ENCODE measurements at regions of chr3 and their contacts with region 1.

Region 1: DNA sequence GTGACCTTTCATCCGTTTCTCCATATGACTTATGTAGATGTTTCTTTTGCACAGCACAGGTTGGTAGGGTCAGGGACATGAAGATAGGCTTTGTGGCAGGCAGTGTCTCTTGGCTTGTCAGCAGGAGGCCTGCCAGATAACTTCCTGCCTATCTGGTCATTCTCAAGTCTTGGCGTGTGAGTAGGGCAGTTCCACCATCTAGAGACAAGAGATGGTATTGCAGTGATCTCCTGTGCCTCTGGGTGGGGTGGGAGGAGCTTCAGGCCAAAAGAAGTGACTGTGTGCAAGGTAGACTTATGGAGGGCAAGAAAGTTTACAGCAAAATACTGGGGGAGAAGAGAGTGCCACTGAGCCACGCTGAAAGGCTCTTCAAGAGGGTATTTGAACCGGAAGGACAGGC is 11.0 kb downstream of the TEX264 start:
- DNase-seq: peak; percentile 59 to 93 (median 64)
- ATAC-seq: peak; percentile 80
- H3K4me3 ChIP-seq: peak overlapping the region; percentile 14
- H3K4me3 Mint-ChIP-seq: peak overlapping the region; percentile 47
- H3K27ac ChIP-seq: peak overlapping the region in 1 of 2 donors; percentile 32
- H3K27ac Mint-ChIP-seq: peak overlapping the region; percentile 51
- H3K4me1 ChIP-seq: peaks cover 100% of the 10 kb centered on the region
- H3K4me1 Mint-ChIP-seq: peaks cover 84% of the 10 kb centered on the region
- H3K27me3 ChIP-seq: no peaks in the 10 kb centered on the region
- H3K27me3 Mint-ChIP-seq: no peaks in the 10 kb centered on the region
- CTCF ChIP-seq: peak; percentile 90

Region 2: DNA sequence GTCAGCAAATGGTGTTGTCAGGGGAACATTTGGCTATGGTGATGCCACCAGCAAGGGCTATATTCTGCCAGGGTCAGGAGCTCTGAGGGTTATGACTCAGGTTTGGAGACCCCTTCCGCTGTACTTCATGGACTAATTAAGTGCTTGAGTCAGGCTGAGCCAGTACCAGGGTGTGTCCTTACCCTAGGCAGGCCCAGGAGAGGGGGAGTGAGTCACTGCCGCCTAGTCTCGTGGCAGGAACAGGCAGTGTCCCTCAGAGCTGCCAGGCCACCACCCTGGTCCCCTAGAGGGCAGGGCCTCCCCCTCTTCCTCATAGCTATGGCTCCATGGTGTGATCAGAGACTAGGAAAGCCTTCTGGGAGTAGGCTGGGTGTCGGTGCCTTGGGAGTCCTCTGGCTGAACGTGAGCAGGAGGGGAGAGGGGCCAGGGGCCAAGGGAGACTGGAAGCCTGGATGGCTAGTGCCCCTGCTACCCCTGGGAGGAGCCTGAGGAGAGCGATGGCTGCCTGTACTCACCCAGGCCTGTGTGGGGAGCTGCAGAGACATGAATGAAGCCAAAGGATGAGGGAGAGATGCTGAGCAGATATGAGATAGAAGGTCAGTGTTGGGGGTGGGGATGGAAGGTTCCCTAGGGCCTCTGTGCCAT is 1054.5 kb before region 1 on chr3:
- CTCF ChIA-PET with region 1: no interaction called
- POLR2A ChIA-PET with region 1: no interaction called
- intact Hi-C with region 1: loop called in 1 of 2 experiments (anchors 5 kb)
- DNase-seq: peak in 2 of 14 experiments; percentile 64 to 78
- ATAC-seq: peak; percentile 13
- H3K4me3 ChIP-seq: no peak overlapping the region
- H3K4me3 Mint-ChIP-seq: no peak overlapping the region
- H3K27ac ChIP-seq: no peak overlapping the region
- H3K27ac Mint-ChIP-seq: peak overlapping the region; percentile 70
- H3K4me1 ChIP-seq: peaks cover 99% of the 10 kb centered on the region
- H3K4me1 Mint-ChIP-seq: peaks cover 89% of the 10 kb centered on the region
- H3K27me3 ChIP-seq: no peaks in the 10 kb centered on the region
- H3K27me3 Mint-ChIP-seq: no peaks in the 10 kb centered on the region
- CTCF ChIP-seq: no peak

Region 3: GRCh38 chr3:51384726-51385473 is 297.2 kb before region 1 on chr3 and contains the start of gene MANF:
- CTCF ChIA-PET with region 1: interaction called, 3 read pairs
- POLR2A ChIA-PET with region 1: interaction called, 9 read pairs
- intact Hi-C with region 1: loop called (anchors 1 to 5 kb)
- DNase-seq: peak; percentile 93 to 99 (median 95)
- ATAC-seq: peak; percentile 95
- H3K4me3 ChIP-seq: peak within 1 kb of the TSS; percentile 99
- H3K4me3 Mint-ChIP-seq: peak within 1 kb of the TSS; percentile 99
- H3K27ac ChIP-seq: peak within 1 kb of the TSS; percentile 84 to 96
- H3K27ac Mint-ChIP-seq: peak within 1 kb of the TSS; percentile 99
- H3K4me1 ChIP-seq: peaks cover 47% of the 10 kb centered on the region
- H3K4me1 Mint-ChIP-seq: peaks cover 55% of the 10 kb centered on the region
- H3K27me3 ChIP-seq: no peaks in the 10 kb centered on the region
- H3K27me3 Mint-ChIP-seq: no peaks in the 10 kb centered on the region
- CTCF ChIP-seq: no peak
- total RNA-seq, gene MANF: 26.4 to 30.2 TPM

Region 4: GRCh38 chr3:51642462-51642861 is 39.6 kb before region 1 on chr3:
- CTCF ChIA-PET with region 1: interaction called, 36 read pairs
- POLR2A ChIA-PET with region 1: no interaction called
- intact Hi-C with region 1: loop called (anchors 1 kb)
- DNase-seq: peak in 3 of 14 experiments; percentile 36 to 40 (median 36)
- ATAC-seq: no peak
- H3K4me3 ChIP-seq: no peak overlapping the region
- H3K4me3 Mint-ChIP-seq: no peak overlapping the region
- H3K27ac ChIP-seq: no peak overlapping the region
- H3K27ac Mint-ChIP-seq: no peak overlapping the region
- H3K4me1 ChIP-seq: no peaks in the 10 kb centered on the region
- H3K4me1 Mint-ChIP-seq: no peaks in the 10 kb centered on the region
- H3K27me3 ChIP-seq: no peaks in the 10 kb centered on the region
- H3K27me3 Mint-ChIP-seq: no peaks in the 10 kb centered on the region
- CTCF ChIP-seq: peak; percentile 35

Region 5: GRCh38 chr3:51662456-51662855 is 19.6 kb before region 1 on chr3:
- CTCF ChIA-PET with region 1: interaction called, 113 read pairs
- POLR2A ChIA-PET with region 1: interaction called, 4 read pairs
- intact Hi-C with region 1: no loop called
- DNase-seq: no peak
- ATAC-seq: no peak
- H3K4me3 ChIP-seq: no peak overlapping the region
- H3K4me3 Mint-ChIP-seq: no peak overlapping the region
- H3K27ac ChIP-seq: no peak overlapping the region
- H3K27ac Mint-ChIP-seq: no peak overlapping the region
- H3K4me1 ChIP-seq: no peaks in the 10 kb centered on the region
- H3K4me1 Mint-ChIP-seq: peaks cover 15% of the 10 kb centered on the region
- H3K27me3 ChIP-seq: no peaks in the 10 kb centered on the region
- H3K27me3 Mint-ChIP-seq: no peaks in the 10 kb centered on the region
- CTCF ChIP-seq: no peak

Region 6: GRCh38 chr3:51670823-51671733 is 11.0 kb before region 1 on chr3 and contains the start of gene TEX264:
- CTCF ChIA-PET with region 1: interaction called, 113 read pairs
- POLR2A ChIA-PET with region 1: interaction called, 65 read pairs
- intact Hi-C with region 1: loop called (anchors 1 kb)
- DNase-seq: peak; percentile 88 to 100 (median 95)
- ATAC-seq: peak; percentile 75
- H3K4me3 ChIP-seq: peak within 1 kb of the TSS; percentile 98
- H3K4me3 Mint-ChIP-seq: peak within 1 kb of the TSS; percentile 94
- H3K27ac ChIP-seq: peak within 1 kb of the TSS; percentile 83 to 91
- H3K27ac Mint-ChIP-seq: peak within 1 kb of the TSS; percentile 97
- H3K4me1 ChIP-seq: peaks cover 67% of the 10 kb centered on the region
- H3K4me1 Mint-ChIP-seq: peaks cover 80% of the 10 kb centered on the region
- H3K27me3 ChIP-seq: no peaks in the 10 kb centered on the region
- H3K27me3 Mint-ChIP-seq: no peaks in the 10 kb centered on the region
- CTCF ChIP-seq: no peak
- total RNA-seq, gene TEX264: 24.9 to 25.9 TPM

Region 7: DNA sequence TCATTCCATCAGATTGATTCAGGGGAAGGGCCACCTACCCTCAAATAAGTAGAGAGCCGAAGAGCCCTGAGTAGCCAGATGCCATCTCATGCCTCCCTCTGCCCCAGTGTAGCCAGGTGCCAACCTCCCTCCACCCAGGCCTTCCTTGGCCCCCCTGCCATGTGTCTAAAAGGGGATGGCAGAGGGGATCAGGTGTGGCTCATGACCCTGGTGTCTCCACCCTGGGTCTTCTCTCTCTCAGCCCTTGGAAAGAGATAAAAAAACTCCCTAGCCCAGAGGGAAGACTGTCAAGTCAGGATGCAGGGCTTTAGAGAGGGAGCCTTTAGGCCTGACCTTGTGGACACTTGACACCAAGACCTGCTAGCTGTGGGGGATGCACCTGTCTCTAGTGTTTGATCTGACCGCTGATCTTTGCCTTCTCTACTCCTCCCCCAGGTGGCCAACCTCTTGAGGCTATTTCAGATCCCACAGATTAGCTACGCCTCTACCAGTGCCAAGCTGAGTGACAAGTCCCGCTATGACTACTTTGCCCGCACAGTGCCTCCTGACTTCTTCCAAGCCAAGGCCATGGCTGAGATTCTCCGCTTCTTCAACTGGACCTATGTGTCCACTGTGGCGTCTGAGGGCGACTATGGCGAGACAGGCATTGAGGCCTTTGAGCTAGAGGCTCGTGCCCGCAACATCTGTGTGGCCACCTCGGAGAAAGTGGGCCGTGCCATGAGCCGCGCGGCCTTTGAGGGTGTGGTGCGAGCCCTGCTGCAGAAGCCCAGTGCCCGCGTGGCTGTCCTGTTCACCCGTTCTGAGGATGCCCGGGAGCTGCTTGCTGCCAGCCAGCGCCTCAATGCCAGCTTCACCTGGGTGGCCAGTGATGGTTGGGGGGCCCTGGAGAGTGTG is 30.2 kb after region 1 on chr3:
- CTCF ChIA-PET with region 1: no interaction called
- POLR2A ChIA-PET with region 1: no interaction called
- intact Hi-C with region 1: no loop called
- DNase-seq: peak in 2 of 14 experiments; percentile 8 to 26
- ATAC-seq: no peak
- H3K4me3 ChIP-seq: no peak overlapping the region
- H3K4me3 Mint-ChIP-seq: no peak overlapping the region
- H3K27ac ChIP-seq: no peak overlapping the region
- H3K27ac Mint-ChIP-seq: no peak overlapping the region
- H3K4me1 ChIP-seq: no peaks in the 10 kb centered on the region
- H3K4me1 Mint-ChIP-seq: peaks cover 6% of the 10 kb centered on the region
- H3K27me3 ChIP-seq: no peaks in the 10 kb centered on the region
- H3K27me3 Mint-ChIP-seq: no peaks in the 10 kb centered on the region
- CTCF ChIP-seq: no peak

Region 8: GRCh38 chr3:51759203-51759602 is 77.1 kb after region 1 on chr3:
- CTCF ChIA-PET with region 1: no interaction called
- POLR2A ChIA-PET with region 1: no interaction called
- intact Hi-C with region 1: no loop called
- DNase-seq: no peak
- ATAC-seq: no peak
- H3K4me3 ChIP-seq: no peak overlapping the region
- H3K4me3 Mint-ChIP-seq: no peak overlapping the region
- H3K27ac ChIP-seq: no peak overlapping the region
- H3K27ac Mint-ChIP-seq: no peak overlapping the region
- H3K4me1 ChIP-seq: no peaks in the 10 kb centered on the region
- H3K4me1 Mint-ChIP-seq: no peaks in the 10 kb centered on the region
- H3K27me3 ChIP-seq: no peaks in the 10 kb centered on the region
- H3K27me3 Mint-ChIP-seq: peaks cover 13% of the 10 kb centered on the region
- CTCF ChIP-seq: no peak

Region 9: GRCh38 chr3:51799879-51800749 is 118.0 kb after region 1 on chr3:
- CTCF ChIA-PET with region 1: interaction called, 3 read pairs
- POLR2A ChIA-PET with region 1: interaction called, 3 read pairs
- intact Hi-C with region 1: loop called in 1 of 2 experiments (anchors 2 kb)
- DNase-seq: peak in 5 of 14 experiments; percentile 9 to 69 (median 67)
- ATAC-seq: peak; percentile 54
- H3K4me3 ChIP-seq: no peak overlapping the region
- H3K4me3 Mint-ChIP-seq: no peak overlapping the region
- H3K27ac ChIP-seq: no peak overlapping the region
- H3K27ac Mint-ChIP-seq: no peak overlapping the region
- H3K4me1 ChIP-seq: peaks cover 2% of the 10 kb centered on the region
- H3K4me1 Mint-ChIP-seq: peaks cover 10% of the 10 kb centered on the region
- H3K27me3 ChIP-seq: no peaks in the 10 kb centered on the region
- H3K27me3 Mint-ChIP-seq: peaks cover 11% of the 10 kb centered on the region
- CTCF ChIP-seq: peak; percentile 77

Region 10: GRCh38 chr3:53337167-53337940 is 1655.3 kb after region 1 on chr3:
- CTCF ChIA-PET with region 1: no interaction called
- POLR2A ChIA-PET with region 1: no interaction called
- intact Hi-C with region 1: no loop called
- DNase-seq: no peak
- ATAC-seq: no peak
- H3K4me3 ChIP-seq: no peak overlapping the region
- H3K4me3 Mint-ChIP-seq: no peak overlapping the region
- H3K27ac ChIP-seq: no peak overlapping the region
- H3K27ac Mint-ChIP-seq: no peak overlapping the region
- H3K4me1 ChIP-seq: no peaks in the 10 kb centered on the region
- H3K4me1 Mint-ChIP-seq: peaks cover 27% of the 10 kb centered on the region
- H3K27me3 ChIP-seq: no peaks in the 10 kb centered on the region
- H3K27me3 Mint-ChIP-seq: no peaks in the 10 kb centered on the region
- CTCF ChIP-seq: no peak

Measured in CD4-positive, alpha-beta T cell (primary cell).